Endothelial cell of umbilical vein (primary cell): ENCODE measurements at regions of chr15 and their contacts with region 1.

Region 1: DNA sequence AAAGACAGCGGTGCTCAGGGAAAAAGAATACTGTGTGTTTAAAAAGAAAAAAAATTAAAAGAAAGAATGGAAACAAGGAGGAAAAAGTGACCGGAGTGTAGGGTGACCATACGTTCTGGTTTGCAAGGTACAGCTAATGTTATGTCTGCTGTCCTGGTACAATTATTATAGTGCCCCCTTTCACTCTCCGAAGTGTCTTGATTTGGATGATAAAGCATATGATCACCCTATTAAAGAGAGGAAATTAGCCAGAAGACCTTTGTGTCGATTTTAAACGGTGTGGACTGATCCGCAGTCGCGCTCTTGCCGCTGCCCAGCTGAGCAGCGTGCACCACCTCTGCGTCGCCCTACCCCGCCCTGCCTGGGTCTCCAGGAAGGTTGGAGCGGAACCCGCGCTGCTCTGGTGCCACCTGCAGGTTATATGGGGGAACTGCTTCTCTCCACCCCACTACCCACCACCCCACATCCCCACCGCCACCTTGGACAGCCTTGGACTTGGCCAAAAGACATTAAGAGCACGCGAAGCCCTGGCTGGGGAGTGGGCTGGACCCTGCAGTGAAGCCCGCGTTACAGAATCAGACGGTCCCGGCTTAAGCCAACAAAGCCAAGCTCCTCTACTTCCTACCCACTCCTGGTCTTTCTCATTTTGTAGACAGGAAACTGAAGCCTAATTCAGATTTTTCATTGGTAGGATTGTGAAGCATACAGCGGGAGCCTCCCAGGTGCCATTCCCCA is 41.2 kb upstream of the UBE2Q2 start:
- DNase-seq: peak; percentile 67
- H3K4me3 ChIP-seq: no peak overlapping the region
- H3K27ac ChIP-seq: no peak overlapping the region
- H3K4me1 ChIP-seq: no peaks in the 10 kb centered on the region
- H3K27me3 ChIP-seq: peaks cover 44 to 49% of the 10 kb centered on the region in 2 experiments
- CTCF ChIP-seq: peak; percentile 59 to 91
- POLR2A ChIP-seq: no peak

Region 2: DNA sequence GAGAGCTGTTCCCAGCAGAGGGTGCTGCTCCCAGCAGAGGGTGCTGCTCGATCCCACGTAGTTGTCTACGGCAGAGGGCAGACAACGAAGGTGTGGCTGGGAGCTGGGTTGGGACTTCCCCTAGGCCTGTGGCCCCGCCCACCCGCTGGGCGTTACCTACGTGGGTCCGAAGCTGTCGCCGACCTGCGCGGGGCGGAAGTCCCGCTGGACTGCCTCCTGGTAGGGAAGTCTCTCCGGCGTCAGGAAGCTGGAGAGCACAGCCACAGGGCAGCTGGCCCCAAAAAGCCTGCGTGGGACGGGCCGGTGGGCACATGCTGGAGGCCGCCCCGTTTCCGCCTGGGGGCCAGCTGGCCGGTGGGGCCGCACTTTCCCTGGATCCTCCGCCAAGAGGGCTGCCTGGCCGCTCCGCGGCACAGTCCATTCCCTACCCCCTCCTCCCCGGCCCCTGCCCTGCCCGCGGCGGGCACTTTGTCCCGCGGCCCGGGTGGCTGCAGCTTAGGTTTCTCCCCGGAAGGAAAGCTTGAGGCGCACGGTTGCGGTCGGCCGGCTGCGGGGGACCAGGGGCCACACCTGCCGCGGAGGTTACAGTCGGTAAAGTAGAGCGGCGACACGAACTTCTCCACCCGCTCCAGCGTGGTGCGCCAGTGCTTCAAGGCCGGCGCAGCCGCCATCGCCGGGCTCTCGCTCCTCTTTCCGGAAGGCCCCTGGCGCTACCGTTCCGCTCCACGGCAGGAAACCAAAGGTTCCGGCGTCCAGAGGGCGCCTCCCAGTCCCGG is 433.9 kb before region 1 on chr15 and contains the start of gene MAN2C1:
- CTCF ChIA-PET with region 1: interaction called, 7 read pairs
- POLR2A ChIA-PET with region 1: no interaction called
- dilution Hi-C with region 1: no loop called
- intact Hi-C with region 1: loop called (anchors 10 kb)
- DNase-seq: peak; percentile 93
- H3K4me3 ChIP-seq: peak within 1 kb of the TSS; percentile 50 to 83 (median 51)
- H3K27ac ChIP-seq: peak within 1 kb of the TSS; percentile 79
- H3K4me1 ChIP-seq: peaks cover 15% of the 10 kb centered on the region
- H3K27me3 ChIP-seq: no peaks in the 10 kb centered on the region
- CTCF ChIP-seq: peak; percentile 63 to 76
- POLR2A ChIP-seq: peak; percentile 93
- total RNA-seq, gene MAN2C1: 248 TPM in 2 replicates

Region 3: GRCh38 chr15:75673426-75674235 is 128.4 kb before region 1 on chr15:
- CTCF ChIA-PET with region 1: no interaction called
- POLR2A ChIA-PET with region 1: no interaction called
- dilution Hi-C with region 1: no loop called
- intact Hi-C with region 1: no loop called
- DNase-seq: no peak
- H3K4me3 ChIP-seq: no peak overlapping the region
- H3K27ac ChIP-seq: no peak overlapping the region
- H3K4me1 ChIP-seq: no peaks in the 10 kb centered on the region
- H3K27me3 ChIP-seq: peaks cover 0 to 5% of the 10 kb centered on the region in 2 experiments
- CTCF ChIP-seq: no peak
- POLR2A ChIP-seq: no peak

Region 4: DNA sequence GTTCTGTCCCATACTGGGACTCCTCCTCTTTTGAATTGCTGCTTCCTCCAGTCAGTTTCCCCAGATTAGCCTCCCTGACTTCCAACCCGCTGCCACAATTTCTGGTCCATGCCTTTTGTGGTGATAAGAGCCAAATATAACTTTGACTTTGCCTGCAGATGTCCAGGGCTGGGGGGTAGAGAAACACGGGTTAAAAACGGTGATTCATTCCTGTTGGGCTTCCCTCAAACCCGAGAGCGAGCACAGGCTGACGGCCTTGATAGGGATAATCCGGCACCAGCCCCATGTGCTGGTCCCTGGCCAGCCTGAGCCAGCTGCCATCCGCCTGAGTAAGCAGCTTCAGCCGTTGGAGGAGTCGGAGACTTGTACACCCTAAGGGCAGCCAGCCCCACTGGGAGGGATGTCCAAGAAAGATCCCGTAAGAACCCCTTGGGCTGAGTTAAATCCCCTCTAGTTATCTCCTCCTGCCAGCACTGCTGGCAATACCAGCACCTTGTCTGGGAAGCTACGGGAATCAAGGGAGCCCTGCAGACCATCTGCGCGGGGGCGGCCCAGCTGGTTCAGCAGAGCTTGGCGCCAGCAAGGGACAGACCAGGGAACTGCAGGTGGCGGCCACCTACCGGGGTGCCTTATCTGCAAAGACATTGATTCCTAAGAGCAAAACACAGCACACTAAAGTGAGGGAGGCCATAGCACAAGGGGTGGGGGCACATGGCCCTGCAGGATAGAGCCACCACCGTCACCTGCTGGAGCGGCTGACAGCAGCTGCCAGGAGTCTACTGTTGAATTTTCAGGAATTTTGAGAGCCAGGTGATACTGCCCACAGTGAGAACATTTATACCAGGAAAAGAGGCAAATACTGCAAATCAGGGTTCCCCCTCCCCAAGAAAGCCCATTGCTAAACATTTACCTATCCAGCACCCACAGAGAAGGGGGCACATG is 107.5 kb before region 1 on chr15:
- CTCF ChIA-PET with region 1: interaction called, 15 read pairs
- POLR2A ChIA-PET with region 1: no interaction called
- dilution Hi-C with region 1: no loop called
- intact Hi-C with region 1: loop called (anchors 2 kb)
- DNase-seq: peak; percentile 81
- H3K4me3 ChIP-seq: no peak overlapping the region
- H3K27ac ChIP-seq: no peak overlapping the region
- H3K4me1 ChIP-seq: peaks cover 16% of the 10 kb centered on the region
- H3K27me3 ChIP-seq: peaks cover 42 to 48% of the 10 kb centered on the region in 2 experiments
- CTCF ChIP-seq: peak in 1 of 2 donors; percentile 14
- POLR2A ChIP-seq: no peak

Region 5: GRCh38 chr15:75723847-75724660 is 78.0 kb before region 1 on chr15:
- CTCF ChIA-PET with region 1: interaction called, 36 read pairs
- POLR2A ChIA-PET with region 1: no interaction called
- dilution Hi-C with region 1: no loop called
- intact Hi-C with region 1: loop called (anchors 1 kb)
- DNase-seq: peak; percentile 84
- H3K4me3 ChIP-seq: no peak overlapping the region
- H3K27ac ChIP-seq: no peak overlapping the region
- H3K4me1 ChIP-seq: no peaks in the 10 kb centered on the region
- H3K27me3 ChIP-seq: peaks cover 4 to 7% of the 10 kb centered on the region in 2 experiments
- CTCF ChIP-seq: no peak
- POLR2A ChIP-seq: no peak

Region 6: GRCh38 chr15:75732809-75733451 is 69.1 kb before region 1 on chr15:
- CTCF ChIA-PET with region 1: interaction called, 36 read pairs
- POLR2A ChIA-PET with region 1: no interaction called
- dilution Hi-C with region 1: no loop called
- intact Hi-C with region 1: loop called (anchors 1 kb)
- DNase-seq: peak; percentile 62
- H3K4me3 ChIP-seq: no peak overlapping the region
- H3K27ac ChIP-seq: no peak overlapping the region
- H3K4me1 ChIP-seq: peaks cover under 1% of the 10 kb centered on the region
- H3K27me3 ChIP-seq: peaks cover 0 to 7% of the 10 kb centered on the region in 2 experiments
- CTCF ChIP-seq: peak; percentile 67 to 85
- POLR2A ChIP-seq: no peak

Region 7: GRCh38 chr15:75785771-75786574 is 16.1 kb before region 1 on chr15:
- CTCF ChIA-PET with region 1: interaction called, 16 read pairs
- POLR2A ChIA-PET with region 1: no interaction called
- dilution Hi-C with region 1: no loop called
- intact Hi-C with region 1: no loop called
- DNase-seq: peak; percentile 15
- H3K4me3 ChIP-seq: no peak overlapping the region
- H3K27ac ChIP-seq: no peak overlapping the region
- H3K4me1 ChIP-seq: no peaks in the 10 kb centered on the region
- H3K27me3 ChIP-seq: peaks cover 14 to 36% of the 10 kb centered on the region in 2 experiments
- CTCF ChIP-seq: peak in 1 of 2 donors; percentile 27
- POLR2A ChIP-seq: no peak

Region 8: DNA sequence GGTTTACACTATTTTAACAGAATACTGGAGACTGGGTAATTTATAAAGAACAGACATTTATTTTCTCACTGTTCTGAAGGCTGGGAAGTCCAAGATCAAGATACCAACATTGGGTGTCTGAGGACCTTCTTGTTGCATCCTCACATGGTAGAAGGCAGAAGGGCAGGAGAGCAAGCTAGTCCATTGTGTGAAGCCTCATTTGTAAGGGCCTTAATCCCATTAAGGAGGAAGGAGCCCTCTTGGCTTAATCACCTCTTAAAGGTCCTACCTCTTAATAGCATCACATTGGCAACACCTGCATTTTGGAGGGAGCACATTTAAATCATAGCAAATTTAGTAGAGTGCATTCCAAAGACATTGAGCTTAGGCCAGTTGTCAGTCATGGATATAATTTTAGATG is 67.4 kb after region 1 on chr15:
- CTCF ChIA-PET with region 1: no interaction called
- POLR2A ChIA-PET with region 1: no interaction called
- dilution Hi-C with region 1: no loop called
- intact Hi-C with region 1: no loop called
- DNase-seq: no peak
- H3K4me3 ChIP-seq: no peak overlapping the region
- H3K27ac ChIP-seq: no peak overlapping the region
- H3K4me1 ChIP-seq: no peaks in the 10 kb centered on the region
- H3K27me3 ChIP-seq: no peaks in the 10 kb centered on the region
- CTCF ChIP-seq: no peak
- POLR2A ChIP-seq: no peak

Region 9: GRCh38 chr15:75884041-75884440 is 82.0 kb after region 1 on chr15:
- CTCF ChIA-PET with region 1: no interaction called
- POLR2A ChIA-PET with region 1: no interaction called
- dilution Hi-C with region 1: no loop called
- intact Hi-C with region 1: no loop called
- DNase-seq: no peak
- H3K4me3 ChIP-seq: no peak overlapping the region
- H3K27ac ChIP-seq: no peak overlapping the region
- H3K4me1 ChIP-seq: no peaks in the 10 kb centered on the region
- H3K27me3 ChIP-seq: no peaks in the 10 kb centered on the region
- CTCF ChIP-seq: no peak
- POLR2A ChIP-seq: no peak

Region 10: GRCh38 chr15:75921729-75922703 is 120.0 kb after region 1 on chr15:
- CTCF ChIA-PET with region 1: interaction called, 17 read pairs
- POLR2A ChIA-PET with region 1: no interaction called
- dilution Hi-C with region 1: no loop called
- intact Hi-C with region 1: loop called (anchors 1 kb)
- DNase-seq: peak; percentile 77
- H3K4me3 ChIP-seq: no peak overlapping the region
- H3K27ac ChIP-seq: no peak overlapping the region
- H3K4me1 ChIP-seq: peaks cover 12% of the 10 kb centered on the region
- H3K27me3 ChIP-seq: no peaks in the 10 kb centered on the region
- CTCF ChIP-seq: peak; percentile 34 to 44
- POLR2A ChIP-seq: no peak